ENCODE measurements at regions of chr2 and their contacts with region 1.

Region 1: DNA sequence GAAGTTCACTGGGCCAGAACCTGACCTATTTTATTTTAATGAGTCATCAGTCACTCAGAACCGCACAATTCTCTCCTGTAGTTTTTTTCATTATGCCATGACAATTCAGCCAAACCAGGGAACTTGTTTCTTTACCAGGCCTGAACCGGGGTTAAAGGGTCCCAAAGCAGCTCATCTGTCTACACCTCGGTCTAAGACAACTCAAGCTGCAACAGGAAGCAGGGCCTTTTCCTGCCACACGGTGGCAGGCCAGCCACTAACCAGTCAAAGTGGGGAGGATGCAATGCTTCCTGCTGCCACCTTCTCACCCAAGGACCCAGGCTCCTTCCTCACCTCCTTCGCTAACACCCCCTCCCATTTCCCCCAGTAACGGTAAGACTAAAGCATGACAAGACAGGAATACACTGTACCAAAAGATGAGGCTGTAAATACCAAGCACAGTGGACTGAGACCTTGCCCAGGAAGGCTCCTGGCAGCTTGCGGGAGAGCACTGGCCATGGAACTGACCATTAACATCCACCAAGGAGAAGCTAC is 56.7 kb upstream of the ACKR3 start:
- DNase-seq: peak; percentile 85
- ATAC-seq: peak; percentile 99
- H3K4me3 Mint-ChIP-seq: no peak overlapping the region
- H3K27ac Mint-ChIP-seq: no peak overlapping the region
- H3K4me1 Mint-ChIP-seq: no peaks in the 10 kb centered on the region
- H3K27me3 Mint-ChIP-seq: peaks cover 2% of the 10 kb centered on the region
- CTCF ChIP-seq: peak; percentile 69

Region 2: GRCh38 chr2:236352761-236353593 is 160.0 kb before region 1 on chr2:
- CTCF ChIA-PET with region 1: interaction called, 12 read pairs
- POLR2A ChIA-PET with region 1: no interaction called
- intact Hi-C with region 1: no loop called
- DNase-seq: peak; percentile 56
- ATAC-seq: peak; percentile 34
- H3K4me3 Mint-ChIP-seq: no peak overlapping the region
- H3K27ac Mint-ChIP-seq: no peak overlapping the region
- H3K4me1 Mint-ChIP-seq: peaks cover 4% of the 10 kb centered on the region
- H3K27me3 Mint-ChIP-seq: peaks cover 3% of the 10 kb centered on the region
- CTCF ChIP-seq: peak; percentile 85

Region 3: GRCh38 chr2:236472720-236473495 is 40.1 kb before region 1 on chr2:
- CTCF ChIA-PET with region 1: no interaction called
- POLR2A ChIA-PET with region 1: no interaction called
- intact Hi-C with region 1: no loop called
- DNase-seq: no peak
- ATAC-seq: no peak
- H3K4me3 Mint-ChIP-seq: no peak overlapping the region
- H3K27ac Mint-ChIP-seq: no peak overlapping the region
- H3K4me1 Mint-ChIP-seq: no peaks in the 10 kb centered on the region
- H3K27me3 Mint-ChIP-seq: no peaks in the 10 kb centered on the region
- CTCF ChIP-seq: no peak

Region 4: GRCh38 chr2:236526455-236527158 is 13.6 kb after region 1 on chr2:
- CTCF ChIA-PET with region 1: interaction called, 29 read pairs
- POLR2A ChIA-PET with region 1: interaction called, 3 read pairs
- intact Hi-C with region 1: no loop called
- DNase-seq: no peak
- ATAC-seq: no peak
- H3K4me3 Mint-ChIP-seq: no peak overlapping the region
- H3K27ac Mint-ChIP-seq: no peak overlapping the region
- H3K4me1 Mint-ChIP-seq: no peaks in the 10 kb centered on the region
- H3K27me3 Mint-ChIP-seq: peaks cover 2% of the 10 kb centered on the region
- CTCF ChIP-seq: no peak

Region 5: GRCh38 chr2:236536727-236537398 is 23.9 kb after region 1 on chr2:
- CTCF ChIA-PET with region 1: interaction called, 29 read pairs
- POLR2A ChIA-PET with region 1: no interaction called
- intact Hi-C with region 1: no loop called
- DNase-seq: peak; percentile 70
- ATAC-seq: peak; percentile 81
- H3K4me3 Mint-ChIP-seq: peak overlapping the region; percentile 96
- H3K27ac Mint-ChIP-seq: peak overlapping the region; percentile 96
- H3K4me1 Mint-ChIP-seq: peaks cover 47% of the 10 kb centered on the region
- H3K27me3 Mint-ChIP-seq: no peaks in the 10 kb centered on the region
- CTCF ChIP-seq: no peak

Region 6: GRCh38 chr2:236546561-236547002 is 33.6 kb after region 1 on chr2:
- CTCF ChIA-PET with region 1: interaction called, 14 read pairs
- POLR2A ChIA-PET with region 1: no interaction called
- intact Hi-C with region 1: no loop called
- DNase-seq: peak; percentile 59
- ATAC-seq: peak; percentile 80
- H3K4me3 Mint-ChIP-seq: peak overlapping the region; percentile 69
- H3K27ac Mint-ChIP-seq: peak overlapping the region; percentile 96
- H3K4me1 Mint-ChIP-seq: peaks cover 90% of the 10 kb centered on the region
- H3K27me3 Mint-ChIP-seq: no peaks in the 10 kb centered on the region
- CTCF ChIP-seq: no peak

Region 7: DNA sequence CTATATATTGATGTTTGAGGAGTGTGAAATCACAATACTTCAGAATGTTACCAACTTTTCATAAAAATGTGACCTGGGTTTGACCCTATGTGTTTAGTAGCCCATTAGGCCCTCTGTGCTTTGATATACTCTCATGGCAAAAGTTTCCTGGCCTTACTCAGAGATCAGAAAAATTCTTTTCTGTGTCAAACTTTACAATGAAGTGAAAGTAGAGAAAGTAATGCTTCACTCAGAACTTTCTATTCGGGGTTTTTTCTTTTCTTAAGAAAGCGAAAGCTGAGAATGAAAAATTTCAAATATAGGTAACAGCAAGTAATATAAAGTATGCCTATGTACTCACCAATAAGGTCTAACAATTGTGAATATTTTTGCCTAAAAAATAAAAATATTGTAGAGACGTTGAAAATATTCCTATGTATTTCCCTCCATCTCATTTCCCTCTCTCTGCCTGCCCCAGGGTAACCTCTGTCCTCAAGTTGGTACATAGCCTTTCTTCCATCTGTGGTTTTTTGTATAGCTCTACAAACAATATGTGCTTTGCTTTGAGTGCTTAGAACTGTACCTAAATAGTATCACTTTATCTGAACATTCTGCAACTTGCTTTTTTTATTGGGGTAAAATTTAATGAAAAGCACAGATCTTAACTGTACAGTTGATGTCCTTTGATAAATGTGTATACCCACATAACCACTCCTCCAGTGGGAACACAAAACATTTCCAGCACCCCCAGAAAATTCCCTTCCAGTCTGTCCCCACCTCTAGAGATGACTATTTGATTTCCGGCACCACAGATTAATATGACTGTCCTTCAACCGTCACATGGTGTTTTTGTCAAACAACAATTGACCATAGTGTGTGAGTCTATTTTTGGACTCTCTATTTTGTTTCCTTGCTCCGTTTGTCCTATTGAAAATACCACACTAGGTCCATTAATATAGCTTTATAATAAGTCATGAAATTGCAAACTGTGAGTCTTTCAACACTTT is 46.3 kb after region 1 on chr2:
- CTCF ChIA-PET with region 1: interaction called, 29 read pairs
- POLR2A ChIA-PET with region 1: no interaction called
- intact Hi-C with region 1: no loop called
- DNase-seq: no peak
- ATAC-seq: peak; percentile 42
- H3K4me3 Mint-ChIP-seq: peak overlapping the region; percentile 34
- H3K27ac Mint-ChIP-seq: peak overlapping the region; percentile 75
- H3K4me1 Mint-ChIP-seq: peaks cover 53% of the 10 kb centered on the region
- H3K27me3 Mint-ChIP-seq: no peaks in the 10 kb centered on the region
- CTCF ChIP-seq: no peak

Region 8: DNA sequence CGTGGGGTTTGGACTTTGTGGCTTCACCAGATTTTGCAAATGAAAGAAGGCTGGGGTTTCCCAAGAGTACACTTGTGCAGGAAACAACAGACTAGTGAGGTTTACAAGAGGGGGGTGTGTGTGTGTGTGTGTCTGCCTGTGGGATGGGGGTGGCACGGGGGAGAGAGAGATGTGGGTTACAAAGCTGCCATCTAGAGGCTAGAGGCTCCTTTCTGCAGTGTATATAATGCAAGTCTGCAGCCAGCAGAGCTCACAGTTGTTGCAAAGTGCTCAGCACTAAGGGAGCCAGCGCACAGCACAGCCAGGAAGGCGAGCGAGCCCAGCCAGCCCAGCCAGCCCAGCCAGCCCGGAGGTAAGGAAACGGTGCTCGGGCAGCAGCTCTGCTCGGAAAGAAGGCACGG is 56.6 kb after region 1 on chr2 and contains the start of gene ACKR3:
- CTCF ChIA-PET with region 1: interaction called, 197 read pairs
- POLR2A ChIA-PET with region 1: interaction called, 15 read pairs
- intact Hi-C with region 1: loop called (anchors 2 kb)
- DNase-seq: peak; percentile 87
- ATAC-seq: peak; percentile 94
- H3K4me3 Mint-ChIP-seq: peak within 1 kb of the TSS; percentile 76
- H3K27ac Mint-ChIP-seq: peak within 1 kb of the TSS; percentile 38
- H3K4me1 Mint-ChIP-seq: peaks cover 26% of the 10 kb centered on the region
- H3K27me3 Mint-ChIP-seq: no peaks in the 10 kb centered on the region
- CTCF ChIP-seq: no peak
- total RNA-seq, gene ACKR3: 2.4 to 3.4 TPM